ENCODE measurements at regions of chr11 and their contacts with region 1.

Region 1: DNA sequence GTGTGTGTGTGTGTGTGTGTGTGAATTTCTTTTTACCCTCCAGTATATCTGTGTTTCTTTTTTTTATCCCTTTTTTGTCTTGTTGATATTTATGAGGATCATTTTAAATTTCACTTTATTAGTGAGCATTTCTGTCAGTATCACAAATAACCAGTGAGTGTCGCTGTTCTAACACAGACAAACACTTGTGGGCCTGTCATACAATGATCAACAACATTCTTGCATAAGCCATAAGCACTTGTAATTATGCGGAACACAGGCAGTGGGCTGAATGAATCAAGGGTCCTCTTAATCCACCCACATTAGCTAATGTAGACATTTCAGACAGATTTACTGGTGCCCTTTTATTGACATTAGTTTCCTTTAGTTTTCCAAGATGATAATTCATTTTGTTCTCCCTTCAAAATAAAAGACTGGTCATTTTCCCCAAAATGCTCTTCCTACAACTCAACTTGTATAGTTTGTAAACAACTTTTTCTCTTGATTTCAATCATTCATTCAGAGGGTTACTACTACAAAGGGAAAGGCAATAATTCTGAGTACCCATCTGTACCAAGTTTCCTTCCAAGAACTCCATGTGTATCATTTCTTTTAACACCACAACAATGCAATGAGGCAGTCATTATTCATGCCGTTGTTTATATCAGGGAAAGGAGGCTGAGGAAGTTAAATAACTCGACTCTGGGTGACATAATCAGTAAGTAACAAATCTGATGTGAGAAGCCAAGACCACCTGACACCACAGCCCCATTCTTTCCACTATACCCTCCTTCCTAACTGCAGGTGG is 34.5 kb upstream of the ANO3 start:
- DNase-seq: peak; percentile 34
- H3K4me3 Mint-ChIP-seq: no peak overlapping the region
- H3K27ac Mint-ChIP-seq: peak overlapping the region; percentile 42
- H3K4me1 Mint-ChIP-seq: no peaks in the 10 kb centered on the region
- H3K27me3 Mint-ChIP-seq: no peaks in the 10 kb centered on the region
- CTCF ChIP-seq: peak; percentile 65

Region 2: GRCh38 chr11:26399336-26399735 is 102.0 kb after region 1 on chr11:
- CTCF ChIA-PET with region 1: no interaction called
- intact Hi-C with region 1: no loop called
- DNase-seq: no peak
- H3K4me3 Mint-ChIP-seq: no peak overlapping the region
- H3K27ac Mint-ChIP-seq: no peak overlapping the region
- H3K4me1 Mint-ChIP-seq: no peaks in the 10 kb centered on the region
- H3K27me3 Mint-ChIP-seq: no peaks in the 10 kb centered on the region
- CTCF ChIP-seq: no peak

Region 3: GRCh38 chr11:26473216-26474194 is 176.1 kb after region 1 on chr11:
- CTCF ChIA-PET with region 1: no interaction called
- intact Hi-C with region 1: loop called (anchors 5 kb)
- DNase-seq: peak; percentile 0
- H3K4me3 Mint-ChIP-seq: peak overlapping the region; percentile 18
- H3K27ac Mint-ChIP-seq: peak overlapping the region; percentile 56
- H3K4me1 Mint-ChIP-seq: peaks cover 5% of the 10 kb centered on the region
- H3K27me3 Mint-ChIP-seq: no peaks in the 10 kb centered on the region
- CTCF ChIP-seq: no peak

Region 4: GRCh38 chr11:26551186-26551801 is 253.9 kb after region 1 on chr11:
- CTCF ChIA-PET with region 1: no interaction called
- intact Hi-C with region 1: loop called (anchors 1 kb)
- DNase-seq: no peak
- H3K4me3 Mint-ChIP-seq: no peak overlapping the region
- H3K27ac Mint-ChIP-seq: no peak overlapping the region
- H3K4me1 Mint-ChIP-seq: no peaks in the 10 kb centered on the region
- H3K27me3 Mint-ChIP-seq: no peaks in the 10 kb centered on the region
- CTCF ChIP-seq: peak; percentile 10

Region 5: DNA sequence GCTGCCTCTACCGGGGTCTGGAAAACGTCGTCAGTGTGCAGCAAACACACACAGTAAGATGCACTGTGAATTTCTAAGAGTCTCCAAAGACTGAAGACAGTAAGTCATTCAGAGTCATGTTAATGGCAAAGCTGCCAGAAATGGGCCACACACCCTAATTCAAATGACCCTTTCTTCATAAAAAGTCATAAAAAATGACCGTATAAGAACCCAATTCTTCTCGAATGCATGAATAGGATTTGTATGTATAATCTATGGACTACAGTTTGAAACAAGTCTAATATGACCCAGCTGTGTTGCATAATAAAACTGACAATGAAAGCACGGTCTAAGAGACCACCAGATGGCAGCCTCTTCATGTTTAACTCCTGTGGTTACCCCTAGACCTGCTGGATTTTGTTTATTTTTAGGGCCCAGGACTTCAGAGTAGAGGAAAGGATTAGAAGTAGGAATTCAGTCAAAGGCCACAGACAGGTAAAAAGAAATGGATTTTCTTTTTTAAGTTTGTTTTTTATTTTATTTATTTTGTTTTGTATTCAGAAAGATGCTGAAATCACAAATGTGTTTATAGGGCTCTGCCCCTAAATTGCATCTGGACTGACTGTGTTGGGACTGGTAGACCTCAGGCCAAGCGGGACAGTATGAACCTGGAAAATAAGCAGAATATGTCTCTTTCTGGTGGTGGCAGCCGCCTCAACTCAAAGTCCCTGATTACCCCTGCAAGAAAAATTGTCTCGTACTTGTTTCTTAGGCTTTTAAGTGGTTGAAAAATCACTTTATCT is 456.5 kb after region 1 on chr11:
- CTCF ChIA-PET with region 1: no interaction called
- intact Hi-C with region 1: loop called (anchors 5 kb)
- DNase-seq: peak; percentile 44
- H3K4me3 Mint-ChIP-seq: no peak overlapping the region
- H3K27ac Mint-ChIP-seq: no peak overlapping the region
- H3K4me1 Mint-ChIP-seq: no peaks in the 10 kb centered on the region
- H3K27me3 Mint-ChIP-seq: peaks cover 11% of the 10 kb centered on the region
- CTCF ChIP-seq: peak; percentile 59